Panc1 (cell line): ENCODE measurements at regions of chr17 and their contacts with region 1.

Region 1: GRCh38 chr17:49556223-49556971 is 19.3 kb upstream of the NXPH3 start:
- DNase-seq: no peak
- ATAC-seq: peak; percentile 92
- H3K4me3 ChIP-seq: peak overlapping the region in 1 of 2 experiments; percentile 2; a peak in 1 of 4 replicates
- H3K27ac ChIP-seq: no peak overlapping the region; the same call in 1 of the 2 replicates
- H3K4me1 ChIP-seq: peaks cover 4% of the 10 kb centered on the region; the same call in 1 of the 2 replicates
- H3K27me3 ChIP-seq: no peaks in the 10 kb centered on the region
- CTCF ChIP-seq: peak; percentile 99

Region 2: DNA sequence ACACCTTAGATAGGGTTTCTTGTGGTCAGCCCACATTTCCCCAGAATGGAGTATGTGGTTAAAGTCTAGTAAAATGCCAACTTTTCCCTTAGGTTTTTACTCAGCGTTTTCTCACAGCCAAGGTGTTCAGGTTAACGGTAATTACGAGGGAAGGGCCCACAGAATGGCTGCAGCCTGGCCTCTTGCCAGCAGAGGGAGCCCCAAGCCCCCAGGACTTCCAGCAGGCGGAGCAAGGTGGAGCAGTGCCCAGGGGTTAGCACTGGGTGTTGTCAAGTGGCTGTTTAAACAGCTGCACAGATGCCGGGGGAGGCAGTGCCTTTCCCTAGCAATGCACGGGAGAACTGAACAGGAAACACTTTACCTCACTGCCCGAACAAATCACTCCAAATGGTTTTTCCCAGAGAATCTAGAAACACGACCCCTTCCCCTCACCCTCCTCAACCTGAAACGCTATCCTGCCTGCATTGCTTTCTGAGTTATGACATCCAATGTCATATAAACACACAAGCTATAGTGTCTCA is 148.4 kb before region 1 on chr17:
- CTCF ChIA-PET with region 1: interaction called, 9 read pairs
- POLR2A ChIA-PET with region 1: no interaction called
- in situ Hi-C with region 1: no loop called
- intact Hi-C with region 1: loop called (anchors 2 kb)
- DNase-seq: peak; percentile 36
- ATAC-seq: peak; percentile 94
- H3K4me3 ChIP-seq: no peak overlapping the region
- H3K27ac ChIP-seq: no peak overlapping the region
- H3K4me1 ChIP-seq: 0 out of 2 replicates have a peak, but pooled peaks cover 4% of the 10 kb centered on the region
- H3K27me3 ChIP-seq: no peaks in the 10 kb centered on the region
- CTCF ChIP-seq: peak; percentile 95

Region 3: DNA sequence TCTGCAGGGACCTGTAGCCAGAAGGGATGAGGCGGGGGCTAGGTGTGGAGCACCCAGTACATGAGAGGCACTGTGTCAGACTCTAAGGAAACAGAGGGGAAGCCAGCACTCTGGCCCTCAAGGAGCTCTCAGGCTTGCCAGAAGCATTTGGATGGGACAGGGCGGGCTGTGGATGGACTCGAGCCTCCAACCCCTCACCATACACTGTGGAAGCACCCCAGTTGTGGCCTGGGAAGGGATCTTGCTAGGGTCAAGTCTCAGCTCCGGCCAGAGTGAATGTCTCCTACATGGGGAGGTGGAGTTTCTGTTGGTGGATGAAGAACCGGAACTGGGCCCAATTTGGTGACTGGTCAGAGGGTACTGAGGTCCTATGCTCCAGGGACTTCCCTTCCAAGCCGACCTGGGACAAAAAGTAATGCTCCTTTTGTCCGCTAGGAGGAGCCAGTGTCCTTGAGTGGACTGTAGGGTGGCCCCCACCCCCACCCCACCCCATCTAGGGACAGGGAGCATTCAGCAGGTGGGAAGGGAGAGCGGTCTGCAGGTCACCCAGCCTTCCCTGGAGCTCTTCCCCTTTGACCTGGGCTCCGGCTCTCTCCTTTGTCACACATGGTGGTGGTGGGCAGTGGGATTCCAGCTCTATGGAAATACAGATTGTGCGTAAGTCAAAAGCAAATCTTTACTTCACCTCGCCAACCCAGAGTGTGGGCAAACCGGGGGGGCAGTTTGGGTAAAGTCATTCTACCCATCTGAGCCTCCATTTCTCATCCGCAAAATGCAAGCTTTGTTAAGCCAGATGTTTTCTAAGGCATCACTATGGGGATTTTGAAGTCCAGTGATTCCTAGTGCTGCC is 121.4 kb before region 1 on chr17:
- CTCF ChIA-PET with region 1: interaction called, 16 read pairs
- POLR2A ChIA-PET with region 1: no interaction called
- in situ Hi-C with region 1: no loop called
- intact Hi-C with region 1: loop called (anchors 2 kb)
- DNase-seq: no peak
- ATAC-seq: peak; percentile 88
- H3K4me3 ChIP-seq: no peak overlapping the region
- H3K27ac ChIP-seq: no peak overlapping the region
- H3K4me1 ChIP-seq: no peaks in the 10 kb centered on the region
- H3K27me3 ChIP-seq: peaks cover 12% of the 10 kb centered on the region
- CTCF ChIP-seq: peak; percentile 92

Region 4: GRCh38 chr17:49659661-49660382 is 103.4 kb after region 1 on chr17:
- CTCF ChIA-PET with region 1: interaction called, 10 read pairs
- POLR2A ChIA-PET with region 1: no interaction called
- in situ Hi-C with region 1: no loop called
- intact Hi-C with region 1: no loop called
- DNase-seq: no peak
- ATAC-seq: no peak
- H3K4me3 ChIP-seq: no peak overlapping the region
- H3K27ac ChIP-seq: no peak overlapping the region
- H3K4me1 ChIP-seq: no peaks in the 10 kb centered on the region
- H3K27me3 ChIP-seq: no peaks in the 10 kb centered on the region
- CTCF ChIP-seq: no peak

Region 5: DNA sequence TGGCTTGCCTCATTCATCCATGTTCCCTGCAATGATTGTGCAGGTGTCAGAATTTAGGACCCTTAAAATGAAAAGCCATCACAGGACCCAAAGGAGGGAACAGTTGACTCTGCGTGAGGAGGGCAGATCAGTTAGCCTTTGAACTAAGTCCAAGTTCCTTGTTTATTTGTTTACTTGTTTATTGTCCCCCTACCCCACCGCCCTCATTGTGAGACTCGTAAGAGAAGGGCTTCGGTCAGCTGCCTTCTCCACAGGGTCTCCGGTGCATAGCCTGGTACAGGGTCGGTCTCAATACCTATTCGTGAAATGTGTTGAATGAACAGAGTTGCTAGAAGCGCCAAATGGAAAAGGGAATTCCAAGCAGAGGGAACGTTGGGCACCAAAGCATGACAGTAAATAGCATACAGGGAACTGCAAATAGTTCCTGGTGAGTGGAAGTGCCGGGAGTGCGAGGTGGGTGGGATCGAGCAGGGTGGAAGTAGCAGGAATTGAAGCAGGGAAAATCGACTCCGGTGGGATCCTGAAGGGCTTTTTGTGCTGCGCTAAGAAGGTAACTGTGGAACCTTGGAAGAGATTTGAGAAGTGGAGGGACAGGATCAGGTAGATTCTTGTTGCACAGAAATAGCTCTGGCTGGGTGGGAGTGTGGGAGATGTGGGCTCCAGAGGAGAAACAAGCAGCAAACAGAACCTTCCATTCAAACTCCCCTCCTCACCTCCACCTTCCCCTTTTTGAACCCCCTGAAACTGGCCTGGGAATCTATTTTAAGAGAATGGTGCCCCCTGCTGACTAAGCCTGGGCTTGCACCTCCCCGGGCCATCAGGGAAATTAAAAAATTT is 138.7 kb after region 1 on chr17:
- CTCF ChIA-PET with region 1: interaction called, 11 read pairs
- POLR2A ChIA-PET with region 1: no interaction called
- in situ Hi-C with region 1: no loop called
- intact Hi-C with region 1: no loop called
- DNase-seq: no peak
- ATAC-seq: peak; percentile 52
- H3K4me3 ChIP-seq: peak overlapping the region; percentile 9 to 40; a peak in 3 of 4 replicates
- H3K27ac ChIP-seq: peak overlapping the region; percentile 13; the same call in 1 of the 2 replicates
- H3K4me1 ChIP-seq: peaks cover 7% of the 10 kb centered on the region
- H3K27me3 ChIP-seq: no peaks in the 10 kb centered on the region
- CTCF ChIP-seq: peak; percentile 94